ENCODE measurements at regions of chr6 and their contacts with region 1.

Region 1: DNA sequence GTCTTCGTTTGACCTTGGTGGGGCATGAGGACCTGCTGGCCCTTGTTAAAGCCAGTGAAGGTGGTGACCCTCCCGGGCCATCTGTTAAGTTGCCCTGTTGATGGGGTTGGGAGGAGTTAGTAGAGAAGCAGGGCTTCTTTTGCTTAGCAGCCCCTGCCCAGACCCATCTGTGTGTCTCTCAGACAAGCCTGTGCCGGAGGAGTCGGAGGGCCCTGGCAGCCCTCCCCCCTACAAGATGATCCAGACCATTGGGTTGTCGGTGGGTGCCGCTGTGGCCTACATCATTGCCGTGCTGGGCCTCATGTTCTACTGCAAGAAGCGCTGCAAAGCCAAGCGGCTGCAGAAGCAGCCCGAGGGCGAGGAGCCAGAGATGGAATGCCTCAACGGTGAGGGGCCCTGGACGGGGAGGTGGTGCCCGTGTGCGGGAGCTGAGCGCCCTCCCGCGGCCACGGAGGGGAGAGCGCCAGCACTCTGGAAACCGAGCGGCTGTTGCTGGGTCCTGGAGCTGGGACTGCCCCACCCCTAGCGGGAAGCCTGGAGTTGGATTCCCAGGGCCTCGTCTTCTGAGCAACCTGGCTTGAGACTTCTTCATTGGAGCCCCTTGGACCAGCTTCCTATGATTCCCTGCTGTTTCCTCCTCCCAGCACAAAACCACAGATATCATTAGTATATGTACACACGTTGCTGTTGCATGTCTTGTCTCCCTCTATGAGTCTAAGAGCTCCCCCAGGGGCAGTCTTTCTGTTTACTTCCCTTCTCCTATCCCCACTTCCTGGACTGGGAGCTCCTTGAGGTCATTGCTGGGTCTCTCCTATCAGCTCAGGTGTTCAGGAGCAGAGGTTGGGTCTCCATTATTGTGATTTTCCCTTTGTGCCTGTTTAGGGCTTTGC is 27.6 kb upstream of the SRF start:
- DNase-seq: peak; percentile 75
- H3K4me3 ChIP-seq: no peak overlapping the region
- CTCF ChIP-seq: peak; percentile 98

Region 2: GRCh38 chr6:43013843-43014433 is 129.5 kb before region 1 on chr6 and contains the starts of genes KLHDC3 and MEA1:
- CTCF ChIA-PET with region 1: interaction called, 14 read pairs
- POLR2A ChIA-PET with region 1: interaction called, 3 read pairs
- DNase-seq: peak; percentile 99
- H3K4me3 ChIP-seq: peak within 1 kb of the TSS; percentile 98
- CTCF ChIP-seq: no peak

Region 3: DNA sequence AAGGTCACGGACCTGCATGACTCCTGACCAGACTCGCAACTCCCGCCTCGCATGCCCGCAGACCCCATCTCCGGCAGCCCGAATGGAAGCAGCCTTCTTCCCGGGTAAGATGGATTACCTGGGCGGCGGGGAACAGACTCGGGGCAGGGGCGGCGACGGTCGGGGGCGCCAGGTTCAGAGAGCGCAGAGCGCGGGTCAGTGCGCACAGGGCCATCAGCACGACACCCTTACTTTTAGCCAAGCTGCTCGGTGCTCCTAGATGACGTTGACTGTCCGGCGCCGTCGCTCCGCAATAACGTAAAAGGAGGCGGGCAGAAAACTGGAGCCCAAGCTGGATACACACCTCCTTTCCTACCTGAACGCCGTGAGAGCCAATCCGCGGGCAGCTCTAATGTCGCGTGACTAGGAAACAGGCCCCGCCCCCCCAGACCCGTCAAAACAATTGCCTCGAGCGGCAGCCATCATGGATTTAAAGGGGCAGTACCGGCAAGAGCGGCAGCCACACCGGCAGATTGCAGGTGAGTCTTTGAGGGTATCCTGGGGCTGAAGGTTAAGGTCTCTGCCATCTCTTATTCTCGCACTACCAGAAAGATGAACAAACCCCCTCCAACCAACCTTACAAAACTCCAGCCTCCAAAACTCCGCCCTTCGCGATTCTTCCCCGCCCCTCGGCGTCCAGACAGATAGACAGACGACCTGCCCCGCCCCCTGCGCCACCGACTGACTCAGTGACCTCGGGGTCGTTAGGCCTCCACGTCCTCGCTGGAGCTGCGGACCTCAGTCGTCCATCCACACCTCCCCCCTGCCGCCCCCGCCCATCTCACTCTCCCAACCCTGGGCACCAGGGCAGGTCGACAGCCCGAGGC is 84.1 kb before region 1 on chr6 and contains the starts of genes KLC4 and MRPL2:
- CTCF ChIA-PET with region 1: interaction called, 51 read pairs
- POLR2A ChIA-PET with region 1: interaction called, 7 read pairs
- DNase-seq: peak; percentile 90
- H3K4me3 ChIP-seq: peak within 1 kb of the TSS; percentile 98
- CTCF ChIP-seq: no peak

Region 4: DNA sequence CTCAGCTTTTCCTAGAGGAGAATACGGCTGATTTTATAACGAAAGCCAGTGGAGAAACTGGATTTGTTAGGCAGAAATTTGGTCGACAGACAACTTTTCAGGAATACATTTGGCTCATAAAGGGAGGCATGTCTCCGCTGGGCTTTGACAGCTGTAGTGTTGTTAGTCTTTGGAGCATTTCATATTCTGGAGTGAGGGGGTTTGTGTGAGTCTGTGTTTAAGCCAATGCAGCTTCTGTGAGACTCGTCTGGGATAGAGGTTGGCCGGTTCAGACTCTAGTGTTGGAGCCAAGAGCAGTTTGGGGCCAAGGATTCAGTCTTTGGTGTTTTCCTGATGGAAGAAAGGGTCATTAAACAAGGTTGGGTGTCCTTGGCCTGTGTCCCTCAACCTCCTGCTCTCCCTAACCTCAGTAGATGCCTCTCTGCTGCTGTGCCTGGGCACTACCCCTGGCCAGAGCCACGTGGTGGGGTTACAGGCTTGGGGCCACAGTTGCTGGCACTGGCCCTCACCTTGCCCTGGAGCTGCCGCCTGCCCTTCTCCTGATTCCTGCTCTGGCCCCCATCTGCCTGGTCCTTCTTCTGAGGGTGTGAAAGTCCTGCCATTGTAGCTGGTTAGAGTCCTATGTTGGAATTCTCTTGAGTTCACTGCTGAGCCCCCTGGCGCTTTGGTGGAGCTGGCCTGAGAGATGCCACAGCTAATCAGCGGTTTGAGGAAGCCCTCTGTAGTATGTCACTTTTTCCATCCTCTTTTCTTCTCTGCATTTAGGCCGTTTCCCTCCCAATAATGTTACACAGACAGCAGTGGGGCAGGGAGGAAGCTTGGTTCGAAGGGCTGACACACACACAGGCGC is 60.4 kb before region 1 on chr6:
- CTCF ChIA-PET with region 1: interaction called, 183 read pairs
- POLR2A ChIA-PET with region 1: interaction called, 20 read pairs
- DNase-seq: no peak
- H3K4me3 ChIP-seq: no peak overlapping the region
- CTCF ChIP-seq: no peak

Region 5: DNA sequence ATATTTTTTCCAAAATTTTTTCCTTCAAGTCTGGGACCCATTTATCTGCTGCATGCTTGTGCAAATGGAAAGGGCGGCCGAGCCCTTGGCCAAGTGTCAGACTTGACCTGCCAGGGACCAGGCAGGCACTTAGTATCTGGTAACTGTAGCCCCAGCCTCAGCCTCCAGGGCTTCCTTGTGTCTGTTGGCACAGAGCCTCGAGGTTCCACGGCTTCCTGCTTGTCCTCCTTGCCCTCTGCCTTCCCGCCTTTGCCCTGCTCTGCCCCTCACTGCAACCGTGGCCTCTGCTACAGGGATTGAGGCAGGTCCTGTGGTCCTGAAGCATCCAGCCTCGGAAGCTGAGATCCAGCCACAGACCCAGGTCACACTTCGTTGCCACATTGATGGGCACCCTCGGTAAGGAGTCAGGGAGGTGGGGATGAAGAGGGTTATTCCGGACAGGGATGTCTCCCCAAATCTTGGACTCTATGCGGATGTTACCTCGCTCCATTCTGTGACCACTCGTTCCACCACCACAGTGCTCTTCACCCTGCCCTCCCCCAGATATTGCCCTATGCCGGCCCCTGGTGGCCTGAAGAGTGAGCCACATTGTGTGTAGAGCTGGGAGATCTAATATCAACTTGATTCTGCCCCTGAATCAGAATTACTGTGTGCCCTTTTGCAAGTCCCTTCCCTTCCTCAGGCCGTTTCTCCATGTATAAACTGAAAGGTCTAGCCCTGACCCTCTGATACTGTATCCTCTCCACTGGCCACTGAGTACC is 13.9 kb before region 1 on chr6:
- CTCF ChIA-PET with region 1: interaction called, 50 read pairs
- POLR2A ChIA-PET with region 1: interaction called, 3 read pairs
- DNase-seq: no peak
- H3K4me3 ChIP-seq: no peak overlapping the region
- CTCF ChIP-seq: peak; percentile 64

Region 6: GRCh38 chr6:43211955-43212354 is 68.5 kb after region 1 on chr6:
- CTCF ChIA-PET with region 1: no interaction called
- POLR2A ChIA-PET with region 1: no interaction called
- DNase-seq: no peak
- H3K4me3 ChIP-seq: no peak overlapping the region
- CTCF ChIP-seq: no peak

Measured in AG04449 (cell line).